Vagina (tissue), 2 donors: ENCODE measurements at regions of chrX and their contacts with region 1.

Region 1: DNA sequence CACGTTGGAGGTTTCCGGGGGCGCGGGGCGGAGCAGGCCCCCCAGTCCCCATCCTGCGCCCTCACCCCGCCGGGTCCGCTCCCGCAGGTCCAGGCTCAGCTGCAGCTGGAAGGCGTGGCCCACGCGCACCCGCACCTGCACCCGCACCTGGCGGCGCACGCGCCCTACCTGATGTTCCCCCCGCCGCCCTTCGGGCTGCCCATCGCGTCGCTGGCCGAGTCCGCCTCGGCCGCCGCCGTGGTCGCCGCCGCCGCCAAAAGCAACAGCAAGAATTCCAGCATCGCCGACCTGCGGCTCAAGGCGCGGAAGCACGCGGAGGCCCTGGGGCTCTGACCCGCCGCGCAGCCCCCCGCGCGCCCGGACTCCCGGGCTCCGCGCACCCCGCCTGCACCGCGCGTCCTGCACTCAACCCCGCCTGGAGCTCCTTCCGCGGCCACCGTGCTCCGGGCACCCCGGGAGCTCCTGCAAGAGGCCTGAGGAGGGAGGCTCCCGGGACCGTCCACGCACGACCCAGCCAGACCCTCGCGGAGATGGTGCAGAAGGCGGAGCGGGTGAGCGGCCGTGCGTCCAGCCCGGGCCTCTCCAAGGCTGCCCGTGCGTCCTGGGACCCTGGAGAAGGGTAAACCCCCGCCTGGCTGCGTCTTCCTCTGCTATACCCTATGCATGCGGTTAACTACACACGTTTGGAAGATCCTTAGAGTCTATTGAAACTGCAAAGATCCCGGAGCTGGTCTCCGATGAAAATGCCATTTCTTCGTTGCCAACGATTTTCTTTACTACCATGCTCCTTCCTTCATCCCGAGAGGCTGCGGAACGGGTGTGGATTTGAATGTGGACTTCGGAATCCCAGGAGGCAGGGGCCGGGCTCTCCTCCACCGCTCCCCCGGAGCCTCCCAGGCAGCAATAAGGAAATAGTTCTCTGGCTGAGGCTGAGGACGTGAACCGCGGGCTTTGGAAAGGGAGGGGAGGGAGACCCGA is 14.0 kb downstream of the SHOX start:
- DNase-seq: peak; percentile 27 to 74
- H3K4me3 ChIP-seq: no peak overlapping the region
- H3K27ac ChIP-seq: no peak overlapping the region
- H3K4me1 ChIP-seq: no peaks in the 10 kb centered on the region
- H3K27me3 ChIP-seq: no peaks in the 10 kb centered on the region
- CTCF ChIP-seq: no peak
- POLR2A ChIP-seq: no peak

Region 2: GRCh38 chrX:1803741-1804140 is 1159.1 kb after region 1 on chrX:
- intact Hi-C with region 1: loop called (anchors 5 kb)
- DNase-seq: peak in 1 of 2 donors; percentile 52
- H3K4me3 ChIP-seq: no peak overlapping the region
- H3K27ac ChIP-seq: no peak overlapping the region
- H3K4me1 ChIP-seq: no peaks in the 10 kb centered on the region
- H3K27me3 ChIP-seq: no peaks in the 10 kb centered on the region
- CTCF ChIP-seq: no peak
- POLR2A ChIP-seq: no peak